Activated CD4-positive, alpha-beta memory T cell treated with anti-CD3 and anti-CD28 coated beads, Interleukin-2, amount 10 ng/mL, durations not matched to agents 7 days and 5 days (primary cell): ENCODE measurements at regions of chr2 and their contacts with region 1.

Region 1: DNA sequence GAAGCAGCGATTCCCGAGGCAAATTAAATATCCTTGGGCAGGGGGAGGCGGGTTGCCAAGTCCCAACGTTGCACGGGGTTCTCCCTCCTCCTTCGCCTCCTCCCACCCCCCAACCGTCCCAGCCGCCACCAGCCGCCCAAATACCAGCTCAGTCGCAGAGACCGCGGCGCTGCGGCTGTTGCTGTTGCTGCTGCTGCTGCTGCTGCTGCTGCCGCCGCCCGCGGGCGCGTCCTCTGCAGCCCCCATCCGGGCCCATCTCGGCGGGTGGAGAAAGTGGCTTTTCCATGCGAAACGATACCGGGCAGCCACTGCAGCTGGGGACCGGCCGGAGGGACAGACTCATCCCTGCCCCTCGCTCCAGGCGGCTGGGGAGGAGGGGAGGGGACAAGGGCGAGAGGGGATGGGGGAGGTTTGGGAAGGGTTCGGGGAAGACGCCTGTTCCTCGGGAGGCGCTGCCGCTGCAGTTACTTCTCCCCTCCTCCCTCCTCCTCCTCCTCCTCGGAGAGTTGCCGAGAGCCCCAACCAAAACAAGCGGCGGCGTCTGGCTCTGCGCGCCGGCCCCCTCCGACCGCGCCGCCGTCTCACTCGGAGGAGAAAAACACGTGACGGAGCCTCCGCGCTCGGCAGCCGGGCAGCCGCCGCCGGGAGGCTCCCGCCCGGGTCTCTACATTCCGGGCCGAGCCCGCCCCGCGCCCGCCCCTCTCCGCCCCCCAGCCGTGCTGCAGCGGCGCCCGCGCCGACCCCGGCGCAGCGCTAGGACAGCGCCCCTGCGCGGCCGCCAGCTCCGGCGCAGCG is at the start of gene IRS1:
- DNase-seq: peak; percentile 65
- H3K4me3 Mint-ChIP-seq: peak within 1 kb of the TSS; percentile 83
- H3K27ac Mint-ChIP-seq: peak within 1 kb of the TSS; percentile 71
- H3K4me1 Mint-ChIP-seq: peaks cover 43% of the 10 kb centered on the region
- H3K27me3 Mint-ChIP-seq: peaks cover 12% of the 10 kb centered on the region
- total RNA-seq, gene IRS1: 7.2 to 7.4 TPM

Region 2: GRCh38 chr2:225660262-225661131 is 1138.9 kb before region 1 on chr2:
- CTCF ChIA-PET with region 1: interaction called, 10 read pairs
- POLR2A ChIA-PET with region 1: no interaction called
- DNase-seq: peak; percentile 76
- H3K4me3 Mint-ChIP-seq: no peak overlapping the region
- H3K27ac Mint-ChIP-seq: no peak overlapping the region
- H3K4me1 Mint-ChIP-seq: no peaks in the 10 kb centered on the region
- H3K27me3 Mint-ChIP-seq: peaks cover 18% of the 10 kb centered on the region

Region 3: DNA sequence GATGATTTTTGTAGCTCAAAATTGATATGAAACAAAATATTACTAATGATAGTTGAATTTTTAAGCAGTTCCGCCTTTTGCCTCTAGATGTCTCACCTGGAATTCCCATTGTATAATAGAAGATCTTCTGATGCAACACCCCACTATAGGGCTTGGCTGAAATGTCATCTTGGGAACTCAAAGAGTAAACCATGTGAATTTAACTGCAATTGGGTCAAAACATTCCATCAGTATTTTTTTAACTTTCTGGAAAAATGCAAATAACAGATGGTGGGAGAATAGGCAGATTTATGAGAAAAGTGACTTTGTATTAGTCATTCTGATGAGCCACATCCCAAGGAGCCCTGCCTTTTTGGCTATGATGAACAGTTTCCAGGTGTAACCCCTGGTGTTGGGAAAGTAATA is 909.9 kb before region 1 on chr2:
- CTCF ChIA-PET with region 1: interaction called, 18 read pairs
- POLR2A ChIA-PET with region 1: no interaction called
- DNase-seq: no peak
- H3K4me3 Mint-ChIP-seq: no peak overlapping the region
- H3K27ac Mint-ChIP-seq: no peak overlapping the region
- H3K4me1 Mint-ChIP-seq: no peaks in the 10 kb centered on the region
- H3K27me3 Mint-ChIP-seq: no peaks in the 10 kb centered on the region

Region 4: GRCh38 chr2:226652388-226652787 is 147.0 kb before region 1 on chr2:
- CTCF ChIA-PET with region 1: interaction called, 25 read pairs
- POLR2A ChIA-PET with region 1: interaction called, 13 read pairs
- DNase-seq: no peak
- H3K4me3 Mint-ChIP-seq: no peak overlapping the region
- H3K27ac Mint-ChIP-seq: peak overlapping the region; percentile 4
- H3K4me1 Mint-ChIP-seq: peaks cover 65% of the 10 kb centered on the region
- H3K27me3 Mint-ChIP-seq: no peaks in the 10 kb centered on the region

Region 5: GRCh38 chr2:226813148-226813701 is 13.8 kb after region 1 on chr2:
- CTCF ChIA-PET with region 1: interaction called, 13 read pairs
- POLR2A ChIA-PET with region 1: no interaction called
- DNase-seq: no peak
- H3K4me3 Mint-ChIP-seq: no peak overlapping the region
- H3K27ac Mint-ChIP-seq: no peak overlapping the region
- H3K4me1 Mint-ChIP-seq: no peaks in the 10 kb centered on the region
- H3K27me3 Mint-ChIP-seq: peaks cover 26% of the 10 kb centered on the region